AG04450 (cell line): ENCODE measurements at regions of chrX and their contacts with region 1.

Region 1: DNA sequence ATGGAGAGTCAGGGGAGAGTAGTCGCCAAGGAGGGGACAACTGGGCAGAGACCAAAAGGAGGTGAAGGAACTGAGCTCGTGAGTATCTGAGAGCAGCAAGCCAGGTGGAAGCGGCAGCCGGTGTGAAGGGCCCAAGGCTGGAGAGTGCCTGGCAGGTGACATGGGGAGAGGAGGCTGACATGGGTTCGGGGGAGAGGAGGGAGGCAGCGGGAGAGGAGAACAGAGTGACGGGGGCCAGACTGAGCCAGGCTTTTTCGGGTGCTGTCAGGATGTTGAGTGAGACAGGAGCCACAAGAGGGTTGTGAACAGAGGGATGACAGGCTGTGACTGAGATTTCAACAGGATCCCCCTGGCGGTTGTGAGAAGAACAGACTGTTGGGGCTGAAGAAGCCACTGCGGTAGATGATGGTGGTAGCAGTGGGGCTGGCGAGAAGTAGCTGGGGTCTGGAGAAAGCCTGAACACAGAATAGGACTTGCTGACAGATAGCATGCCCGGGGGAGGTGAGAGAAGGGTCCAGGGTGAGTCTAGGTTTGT is 5.7 kb downstream of the ELK1 start:
- DNase-seq: no peak
- H3K4me3 ChIP-seq: no peak overlapping the region
- H3K27ac ChIP-seq: no peak overlapping the region
- H3K27me3 ChIP-seq: no peaks in the 10 kb centered on the region
- CTCF ChIP-seq: peak; percentile 61

Region 2: DNA sequence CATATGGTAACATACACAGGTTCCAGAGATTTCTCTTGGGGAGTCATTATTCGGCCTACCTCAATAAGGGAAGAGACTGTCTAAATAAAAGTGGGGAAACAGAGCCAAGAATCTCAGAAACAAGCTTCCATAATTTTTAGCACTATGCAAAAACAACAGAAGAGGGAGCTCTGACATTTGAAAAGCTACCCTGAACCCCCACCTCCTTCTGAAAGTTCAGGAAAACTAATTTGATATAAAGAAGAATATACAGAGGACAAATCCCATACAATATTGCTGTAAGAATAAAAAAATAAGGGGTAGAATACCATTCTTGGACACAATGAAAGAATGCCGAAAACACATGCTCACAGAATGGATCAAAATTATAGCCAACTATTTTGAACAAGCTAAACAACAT is 147.4 kb before region 1 on chrX:
- CTCF ChIA-PET with region 1: interaction called, 11 read pairs
- POLR2A ChIA-PET with region 1: no interaction called
- DNase-seq: no peak
- H3K4me3 ChIP-seq: no peak overlapping the region
- H3K27ac ChIP-seq: no peak overlapping the region
- H3K27me3 ChIP-seq: no peaks in the 10 kb centered on the region
- CTCF ChIP-seq: peak; percentile 57

Region 3: GRCh38 chrX:47540754-47541538 is 103.7 kb before region 1 on chrX:
- CTCF ChIA-PET with region 1: interaction called, 36 read pairs
- POLR2A ChIA-PET with region 1: no interaction called
- DNase-seq: peak; percentile 76
- H3K4me3 ChIP-seq: no peak overlapping the region
- H3K27ac ChIP-seq: peak overlapping the region; percentile 21
- H3K27me3 ChIP-seq: no peaks in the 10 kb centered on the region
- CTCF ChIP-seq: peak; percentile 63

Region 4: DNA sequence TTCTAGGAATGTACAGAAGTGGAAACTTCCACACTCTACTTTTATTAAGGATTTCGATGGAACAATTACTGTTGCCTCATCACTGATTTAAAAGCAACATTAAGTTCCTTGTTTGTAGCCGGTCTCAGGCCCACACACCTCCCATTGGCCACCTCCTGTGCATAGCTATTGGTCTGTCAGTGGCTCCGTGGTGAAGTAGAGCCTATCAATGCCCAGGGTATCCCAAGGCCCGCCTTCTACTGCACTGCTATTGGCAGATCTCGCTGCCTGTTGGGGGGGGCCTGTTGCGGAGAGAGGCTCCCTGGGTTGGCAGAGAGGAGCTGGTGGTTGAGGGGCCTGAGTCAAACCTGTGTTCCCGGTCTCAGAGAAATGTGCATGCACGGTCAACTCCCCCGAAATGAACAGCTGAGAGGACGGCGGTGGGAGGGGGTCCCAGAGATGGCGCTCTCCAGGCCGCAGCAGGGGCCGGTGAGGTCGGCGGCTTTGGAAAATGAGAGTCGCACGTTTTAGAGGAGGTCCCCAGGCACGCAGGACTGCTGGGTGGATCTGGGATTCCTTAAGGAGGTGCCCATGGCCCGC is 88.5 kb before region 1 on chrX:
- CTCF ChIA-PET with region 1: interaction called, 12 read pairs
- POLR2A ChIA-PET with region 1: no interaction called
- DNase-seq: peak; percentile 81
- H3K4me3 ChIP-seq: peak overlapping the region; percentile 61
- H3K27ac ChIP-seq: peak overlapping the region; percentile 21
- H3K27me3 ChIP-seq: no peaks in the 10 kb centered on the region
- CTCF ChIP-seq: no peak

Region 5: DNA sequence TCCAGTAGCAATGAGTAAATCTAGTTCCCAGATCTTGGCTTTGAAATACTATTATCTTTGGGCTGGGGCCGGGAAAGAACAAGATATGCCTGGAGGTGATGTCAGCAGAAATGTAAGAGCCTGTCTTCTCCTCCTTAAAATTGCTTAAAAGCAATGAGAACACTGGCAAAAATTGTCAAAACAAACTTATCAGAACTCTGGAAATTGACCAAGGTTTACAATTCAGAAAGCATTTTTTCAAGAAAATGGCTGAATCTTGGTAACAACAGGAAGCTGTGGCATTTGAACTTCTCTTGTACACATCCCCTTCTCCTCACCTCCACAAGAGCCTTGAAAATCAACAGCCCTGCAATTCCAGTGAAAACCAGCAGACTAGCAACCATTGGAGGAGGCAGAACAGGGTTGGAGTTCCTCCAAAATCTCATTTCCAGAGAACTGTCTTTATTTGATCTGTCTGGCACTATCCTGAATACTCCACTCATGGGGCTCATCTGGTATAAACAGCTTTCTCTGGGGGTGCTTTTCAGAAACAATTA is 48.8 kb before region 1 on chrX:
- CTCF ChIA-PET with region 1: interaction called, 11 read pairs
- POLR2A ChIA-PET with region 1: no interaction called
- DNase-seq: peak; percentile 37
- H3K4me3 ChIP-seq: no peak overlapping the region
- H3K27ac ChIP-seq: peak overlapping the region; percentile 86
- H3K27me3 ChIP-seq: no peaks in the 10 kb centered on the region
- CTCF ChIP-seq: no peak

Region 6: GRCh38 chrX:47623540-47624027 is 21.0 kb before region 1 on chrX:
- CTCF ChIA-PET with region 1: interaction called, 12 read pairs
- POLR2A ChIA-PET with region 1: interaction called, 3 read pairs
- DNase-seq: peak; percentile 32
- H3K4me3 ChIP-seq: peak overlapping the region; percentile 53
- H3K27ac ChIP-seq: no peak overlapping the region
- H3K27me3 ChIP-seq: no peaks in the 10 kb centered on the region
- CTCF ChIP-seq: no peak